Heart right ventricle (tissue), 16 donors: ENCODE measurements at regions of chr1 and their contacts with region 1.

Region 1: DNA sequence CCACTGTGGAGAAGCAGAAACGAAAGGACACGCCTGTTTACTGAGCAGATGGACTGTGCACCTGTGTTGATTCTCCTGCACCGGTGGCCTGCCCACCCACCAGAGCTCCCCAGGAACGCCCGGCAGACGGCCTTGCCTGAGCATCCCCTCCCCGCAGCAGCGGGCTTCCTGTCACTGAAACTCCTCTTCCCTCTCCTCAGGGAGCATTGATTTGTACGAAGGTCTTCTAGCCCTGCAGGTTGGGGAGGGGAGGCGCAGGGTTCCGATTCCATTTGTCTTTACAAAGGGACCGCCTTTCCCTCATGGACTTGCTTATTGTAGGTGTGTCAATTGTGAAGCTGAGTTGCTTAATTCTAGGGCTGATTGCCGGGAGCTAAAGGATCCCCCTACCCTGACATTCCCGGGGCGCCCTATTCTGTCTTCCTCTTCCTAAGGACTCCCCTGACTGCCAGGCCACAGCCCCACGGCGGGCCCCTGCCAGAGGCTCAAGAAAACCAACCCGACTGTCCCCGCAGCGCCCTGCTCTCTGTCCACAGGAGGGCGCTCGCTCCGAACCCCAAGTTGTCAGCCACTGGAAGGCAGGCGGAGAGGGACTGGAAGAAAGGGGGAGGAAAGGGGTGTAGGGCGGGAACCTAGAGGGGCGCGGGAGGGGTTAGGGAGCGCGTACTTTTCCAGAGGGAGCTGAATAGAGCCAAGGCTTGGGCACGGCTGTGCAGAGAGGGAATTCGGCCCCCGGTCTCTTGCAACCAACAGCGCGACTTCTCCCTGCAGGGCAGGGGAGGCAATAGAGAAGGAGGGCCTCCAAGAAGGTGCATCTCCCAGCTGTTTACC is 2.8 kb downstream of the S100A6 start:
- DNase-seq: peak; percentile 82 to 83
- ATAC-seq: peak; percentile 46 to 75 (median 53)
- H3K4me3 ChIP-seq: peak overlapping the region in 9 of 10 donors; percentile 11 to 93 (median 73)
- H3K27ac ChIP-seq: peak overlapping the region in 9 of 10 donors; percentile 3 to 99 (median 98)
- H3K4me1 ChIP-seq: peaks cover 3 to 54% (median 35%) of the 10 kb centered on the region in 9 donors
- H3K27me3 ChIP-seq: no peaks in the 10 kb centered on the region
- CTCF ChIP-seq: peak; percentile 57 to 91 (median 85)

Region 2: DNA sequence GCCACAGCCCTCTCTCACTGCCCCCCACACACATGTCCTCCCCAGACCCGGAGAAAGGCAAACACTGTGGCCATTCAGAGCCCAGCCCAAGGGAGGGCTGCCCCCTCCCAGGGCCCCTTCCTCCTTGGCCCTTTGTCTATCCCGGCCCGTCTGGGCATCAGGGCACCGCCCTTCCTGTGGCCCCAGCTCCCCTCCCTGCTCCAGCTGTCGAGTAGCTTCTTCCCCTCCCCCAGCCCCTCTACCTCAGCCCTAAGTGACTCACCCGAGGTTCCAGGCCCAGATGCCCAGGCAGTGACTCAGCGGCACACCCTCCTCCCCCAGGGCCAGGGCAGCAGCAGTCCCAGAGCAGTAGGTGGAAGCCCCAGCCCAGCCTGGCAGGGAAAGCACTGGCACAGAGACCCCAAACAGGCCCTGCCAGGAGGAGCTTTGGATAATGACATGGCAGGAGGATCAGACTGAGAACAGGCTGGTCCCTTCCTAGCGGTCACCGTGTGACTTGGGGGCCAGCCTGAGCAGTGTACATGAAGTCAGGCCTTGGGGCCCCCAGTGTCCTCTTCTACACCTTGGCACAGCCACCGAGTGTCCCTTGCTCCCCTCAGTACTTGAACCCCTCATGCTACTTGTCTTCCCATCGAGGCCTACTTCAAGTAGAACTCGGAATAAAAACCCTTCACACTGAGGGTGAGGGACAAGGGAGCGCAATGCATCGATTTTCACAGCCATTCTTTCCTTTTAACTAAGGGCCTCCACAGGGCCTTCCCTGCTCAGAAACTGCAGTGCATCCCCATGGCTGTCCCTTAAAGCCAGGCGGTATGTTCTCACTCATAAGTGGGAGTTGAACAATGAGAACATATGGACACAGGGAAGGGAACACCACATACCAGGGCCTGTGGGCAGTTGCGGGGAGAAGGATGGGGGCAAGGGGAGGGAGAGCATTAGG is 33.7 kb after region 1 on chr1:
- intact Hi-C with region 1: loop called (anchors 1 to 5 kb)
- DNase-seq: peak; percentile 90 to 92
- ATAC-seq: peak; percentile 85 to 96 (median 94)
- H3K4me3 ChIP-seq: peak overlapping the region in 1 of 10 donors; percentile 12
- H3K27ac ChIP-seq: peak overlapping the region; percentile 51 to 96 (median 85)
- H3K4me1 ChIP-seq: peaks cover 26 to 44% (median 36%) of the 10 kb centered on the region in 9 donors
- H3K27me3 ChIP-seq: no peaks in the 10 kb centered on the region
- CTCF ChIP-seq: no peak

Region 3: GRCh38 chr1:153608742-153609584 is 76.0 kb after region 1 on chr1:
- intact Hi-C with region 1: loop called in 2 of 10 experiments (anchors 5 to 10 kb)
- DNase-seq: peak; percentile 78 to 88
- ATAC-seq: peak; percentile 72 to 89 (median 80)
- H3K4me3 ChIP-seq: peak overlapping the region; percentile 38 to 73 (median 55)
- H3K27ac ChIP-seq: peak overlapping the region; percentile 90 to 99 (median 96)
- H3K4me1 ChIP-seq: peaks cover 10 to 57% (median 35%) of the 10 kb centered on the region in 9 donors
- H3K27me3 ChIP-seq: no peaks in the 10 kb centered on the region
- CTCF ChIP-seq: no peak

Region 4: DNA sequence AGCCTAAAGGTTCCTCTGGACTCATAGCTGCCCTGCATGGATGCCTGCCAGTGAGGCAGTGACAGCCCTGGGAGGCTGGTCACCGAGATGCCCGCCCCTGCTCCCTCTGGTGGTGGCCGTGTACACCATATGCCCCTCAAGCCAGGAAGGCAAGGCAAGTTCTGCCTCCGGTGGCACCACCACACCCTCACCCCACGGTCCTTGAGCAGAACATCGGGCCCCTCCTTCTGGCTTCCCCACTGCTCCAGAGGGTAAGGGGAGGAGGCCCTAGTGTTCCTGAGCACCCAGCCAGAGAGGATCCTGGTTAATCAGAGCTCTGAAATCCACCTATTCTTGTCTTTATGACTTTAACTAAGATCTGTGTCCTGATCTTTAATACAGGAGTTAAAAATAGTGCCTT is 84.7 kb after region 1 on chr1:
- intact Hi-C with region 1: loop called in 2 of 10 experiments (anchors 5 to 10 kb)
- DNase-seq: peak; percentile 77 to 84
- ATAC-seq: peak in 7 of 8 donors; percentile 37 to 87 (median 71)
- H3K4me3 ChIP-seq: no peak overlapping the region
- H3K27ac ChIP-seq: peak overlapping the region in 6 of 10 donors; percentile 14 to 70 (median 59)
- H3K4me1 ChIP-seq: peaks cover 5 to 30% (median 21%) of the 10 kb centered on the region in 9 donors
- H3K27me3 ChIP-seq: no peaks in the 10 kb centered on the region
- CTCF ChIP-seq: peak in 8 of 9 donors; percentile 40 to 92 (median 66)